ENCODE measurements at regions of chr21 and their contacts with region 1.

Region 1: GRCh38 chr21:25607151-25608043 is at the start of gene MRPL39:
- DNase-seq: peak; percentile 94
- H3K4me3 ChIP-seq: peak within 1 kb of the TSS; percentile 94
- H3K27ac ChIP-seq: peak within 1 kb of the TSS; percentile 80 to 88
- H3K4me1 ChIP-seq: peaks cover 9% of the 10 kb centered on the region in 2 experiments; a peak in 3 of 4 replicates
- H3K27me3 ChIP-seq: no peaks in the 10 kb centered on the region
- CTCF ChIP-seq: peak; percentile 67
- EP300 ChIP-seq: no peak
- RAD21 ChIP-seq: peak; percentile 48
- polyA plus RNA-seq, gene MRPL39: 21.1 and 26.9 TPM in 2 replicates

Region 2: DNA sequence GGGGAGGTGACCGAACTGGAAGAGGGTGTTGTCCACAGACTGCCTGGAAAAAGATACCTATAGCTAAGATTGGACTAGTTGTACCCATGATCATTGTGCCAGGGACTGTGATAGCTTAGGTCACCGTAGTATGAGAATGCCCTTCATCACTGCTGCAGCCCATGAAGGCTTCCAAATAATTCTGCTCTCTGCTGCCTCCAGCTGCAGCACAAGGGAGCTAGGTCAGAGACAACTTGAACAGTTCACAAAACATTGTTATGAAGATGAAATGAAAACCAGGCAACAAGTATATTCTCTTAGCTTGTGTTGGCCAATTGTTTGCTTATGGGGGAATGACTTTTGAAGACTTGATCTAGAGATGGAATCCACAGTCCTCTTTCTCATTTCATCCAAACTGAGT is 246.8 kb before region 1 on chr21:
- CTCF ChIA-PET with region 1: no interaction called
- POLR2A ChIA-PET with region 1: no interaction called
- DNase-seq: no peak
- H3K4me3 ChIP-seq: no peak overlapping the region
- H3K27ac ChIP-seq: no peak overlapping the region
- H3K4me1 ChIP-seq: no peaks in the 10 kb centered on the region
- H3K27me3 ChIP-seq: no peaks in the 10 kb centered on the region
- CTCF ChIP-seq: peak; percentile 37
- EP300 ChIP-seq: no peak
- RAD21 ChIP-seq: no peak

Region 3: DNA sequence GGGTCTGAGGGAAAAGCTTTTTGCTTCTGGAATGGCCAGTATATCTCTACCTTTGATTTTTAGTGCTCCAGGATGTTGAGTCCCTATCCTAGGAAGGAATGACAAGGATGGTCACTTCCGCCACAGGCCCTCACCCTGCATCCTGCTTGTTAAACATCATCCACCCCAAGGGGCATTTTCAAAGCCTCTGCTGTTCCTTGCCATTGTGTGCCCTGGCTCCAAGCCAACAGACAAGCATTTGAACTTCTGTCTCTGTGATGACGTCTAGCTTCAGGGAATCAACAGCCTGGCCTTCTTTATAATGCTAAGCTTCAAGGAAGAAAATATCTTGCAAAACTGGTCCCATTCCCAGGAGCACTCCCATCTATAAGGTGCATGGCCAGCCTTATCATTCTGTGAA is 19.4 kb after region 1 on chr21:
- CTCF ChIA-PET with region 1: interaction called, 22 read pairs
- POLR2A ChIA-PET with region 1: no interaction called
- DNase-seq: peak; percentile 33
- H3K4me3 ChIP-seq: no peak overlapping the region
- H3K27ac ChIP-seq: peak overlapping the region in 1 of 2 experiments; percentile 28; a peak in 2 of 4 replicates
- H3K4me1 ChIP-seq: peaks cover 0 to 6% of the 10 kb centered on the region in 2 experiments; a peak in 2 of 4 replicates
- H3K27me3 ChIP-seq: no peaks in the 10 kb centered on the region
- CTCF ChIP-seq: no peak
- EP300 ChIP-seq: no peak
- RAD21 ChIP-seq: no peak

Region 4: DNA sequence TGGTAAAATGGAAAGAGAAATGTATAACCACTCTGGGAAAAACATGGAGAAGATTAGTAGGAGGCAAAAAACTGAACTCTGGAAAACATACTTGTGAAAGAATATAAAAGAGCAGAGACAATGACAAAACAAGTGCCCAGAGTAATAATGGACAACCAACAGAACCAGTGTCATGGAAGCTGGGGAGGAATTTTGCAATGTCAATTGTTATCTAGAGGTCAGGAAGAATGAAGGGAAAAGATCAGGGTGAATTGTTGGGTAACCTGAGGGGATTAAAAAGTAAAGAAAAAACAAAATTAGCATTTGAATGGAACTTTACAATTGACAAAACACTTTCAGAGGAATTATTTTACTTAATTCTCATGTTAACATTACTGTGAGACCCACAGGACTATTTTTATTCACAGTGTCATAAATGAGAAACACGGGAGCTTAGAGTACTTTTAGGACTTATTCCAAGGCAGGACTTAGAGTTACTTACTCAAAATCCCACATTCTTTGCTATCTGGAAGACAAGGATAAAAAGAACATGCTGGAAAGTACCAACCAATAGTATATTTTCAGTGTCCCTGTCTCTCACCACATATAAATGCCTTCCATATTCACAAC is 51.1 kb after region 1 on chr21:
- CTCF ChIA-PET with region 1: interaction called, 13 read pairs
- POLR2A ChIA-PET with region 1: no interaction called
- DNase-seq: no peak
- H3K4me3 ChIP-seq: no peak overlapping the region
- H3K27ac ChIP-seq: no peak overlapping the region
- H3K4me1 ChIP-seq: no peaks in the 10 kb centered on the region
- H3K27me3 ChIP-seq: no peaks in the 10 kb centered on the region
- CTCF ChIP-seq: no peak
- EP300 ChIP-seq: no peak
- RAD21 ChIP-seq: no peak

Region 5: DNA sequence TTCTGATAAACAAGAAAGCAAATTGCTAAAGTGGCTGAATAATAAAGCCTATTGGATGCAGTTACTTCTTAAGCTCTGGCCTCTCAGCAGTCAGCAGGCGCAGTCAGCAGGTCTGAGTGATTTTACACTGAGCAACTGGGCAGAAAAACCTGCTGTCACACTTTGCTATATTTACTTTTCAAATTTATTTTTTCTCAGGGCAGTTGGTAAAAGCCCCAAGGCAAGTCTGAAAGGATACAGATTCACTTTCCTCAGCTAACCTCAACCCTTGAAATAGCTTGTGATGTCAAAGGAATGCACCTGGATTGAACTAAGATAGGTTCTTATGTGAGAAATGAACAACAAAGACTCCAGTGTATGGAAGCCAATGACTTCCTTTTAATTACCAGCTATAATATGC is 93.3 kb after region 1 on chr21:
- CTCF ChIA-PET with region 1: interaction called, 75 read pairs
- POLR2A ChIA-PET with region 1: no interaction called
- DNase-seq: no peak
- H3K4me3 ChIP-seq: no peak overlapping the region
- H3K27ac ChIP-seq: no peak overlapping the region
- H3K4me1 ChIP-seq: no peaks in the 10 kb centered on the region
- H3K27me3 ChIP-seq: no peaks in the 10 kb centered on the region
- CTCF ChIP-seq: no peak
- EP300 ChIP-seq: no peak
- RAD21 ChIP-seq: no peak

Region 6: GRCh38 chr21:25717491-25718147 is 110.2 kb after region 1 on chr21:
- CTCF ChIA-PET with region 1: interaction called, 51 read pairs
- POLR2A ChIA-PET with region 1: no interaction called
- DNase-seq: no peak
- H3K4me3 ChIP-seq: no peak overlapping the region
- H3K27ac ChIP-seq: peak overlapping the region in 1 of 2 experiments; percentile 16; a peak in 2 of 4 replicates
- H3K4me1 ChIP-seq: no peaks in the 10 kb centered on the region
- H3K27me3 ChIP-seq: no peaks in the 10 kb centered on the region
- CTCF ChIP-seq: no peak
- EP300 ChIP-seq: no peak
- RAD21 ChIP-seq: no peak

Measured in SK-N-SH (cell line).